PC-9 (cell line): ENCODE measurements at regions of chr16 and their contacts with region 1.

Region 1: DNA sequence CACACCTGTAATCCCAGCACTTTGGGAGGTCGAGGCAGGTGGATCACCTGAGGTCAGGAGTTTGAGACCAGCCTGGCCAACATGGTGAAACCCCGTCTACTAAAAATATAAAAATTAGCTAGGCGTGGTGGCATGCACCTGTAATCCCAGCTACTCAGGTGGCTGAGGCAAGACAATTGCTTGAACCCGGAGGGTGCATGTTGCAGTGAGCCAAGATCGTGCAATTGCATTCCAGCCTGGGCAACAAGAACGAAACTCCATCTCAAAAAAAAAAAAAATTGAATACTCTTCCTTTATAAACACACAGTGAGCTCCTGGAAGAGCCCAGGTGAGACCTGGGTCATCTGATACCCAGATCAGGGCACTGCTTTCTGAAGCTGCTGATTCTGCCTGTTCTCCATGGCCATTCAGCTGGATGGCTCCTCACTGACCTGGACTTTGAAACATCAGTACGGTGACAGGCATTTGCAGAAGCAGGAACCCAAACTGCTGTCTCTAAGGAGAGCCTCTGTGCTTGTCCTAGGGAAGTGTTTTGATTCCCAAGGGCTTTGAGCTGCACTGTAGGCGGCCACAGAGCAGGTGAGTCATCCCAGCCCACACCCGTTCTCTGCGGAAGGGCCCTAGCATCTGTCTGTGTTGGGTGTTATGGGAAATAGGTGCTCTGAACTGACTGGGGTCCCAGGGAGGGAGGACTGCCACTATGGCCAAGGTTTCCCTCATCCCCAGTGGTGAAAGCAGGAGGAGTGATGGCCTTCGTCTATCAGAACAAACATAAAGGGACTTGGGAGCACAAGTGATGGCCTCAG is 60.6 kb upstream of the ADCY9 start:
- DNase-seq: peak; percentile 65 to 69
- H3K4me3 ChIP-seq: peak overlapping the region; percentile 36; the same call in 1 of the 2 replicates
- H3K27ac ChIP-seq: peak overlapping the region; percentile 69
- H3K4me1 ChIP-seq: peaks cover 32% of the 10 kb centered on the region
- H3K27me3 ChIP-seq: no peaks in the 10 kb centered on the region
- CTCF ChIP-seq: no peak

Region 2: DNA sequence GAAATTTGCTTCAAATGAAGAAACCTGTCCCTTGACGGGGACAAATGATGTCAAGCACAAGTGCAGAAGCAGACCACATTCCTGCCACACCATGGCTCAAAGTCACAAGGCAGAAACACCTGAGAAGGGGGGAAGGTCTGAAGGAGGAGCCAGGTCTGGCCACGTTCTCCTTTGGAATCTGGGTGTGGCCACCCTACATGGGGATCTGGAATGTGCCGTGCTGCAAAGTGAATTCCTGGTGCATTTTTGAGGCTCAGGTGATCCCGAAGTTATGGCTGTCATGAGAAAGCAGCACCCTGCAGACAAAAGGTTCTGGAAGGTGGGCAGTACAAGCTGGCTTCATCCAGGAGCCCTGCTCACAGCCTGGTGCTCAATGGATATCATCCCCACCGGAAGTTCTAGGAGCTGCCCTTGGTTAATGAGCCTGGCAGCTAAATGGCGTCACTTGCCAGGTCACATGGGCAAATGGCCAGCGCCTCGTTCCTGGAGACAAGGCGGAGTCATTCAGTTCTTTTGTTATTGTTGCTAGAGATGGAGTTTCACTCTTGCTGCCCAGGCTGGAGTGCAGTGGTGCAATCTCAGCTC is 40.5 kb before region 1 on chr16:
- CTCF ChIA-PET with region 1: no interaction called
- POLR2A ChIA-PET with region 1: no interaction called
- intact Hi-C with region 1: loop called (anchors 2 kb)
- DNase-seq: peak; percentile 95 to 97
- H3K4me3 ChIP-seq: peak overlapping the region; percentile 9; the same call in 1 of the 2 replicates
- H3K27ac ChIP-seq: peak overlapping the region; percentile 84
- H3K4me1 ChIP-seq: peaks cover 11% of the 10 kb centered on the region
- H3K27me3 ChIP-seq: no peaks in the 10 kb centered on the region
- CTCF ChIP-seq: no peak; the same call in 1 of the 2 replicates

Region 3: DNA sequence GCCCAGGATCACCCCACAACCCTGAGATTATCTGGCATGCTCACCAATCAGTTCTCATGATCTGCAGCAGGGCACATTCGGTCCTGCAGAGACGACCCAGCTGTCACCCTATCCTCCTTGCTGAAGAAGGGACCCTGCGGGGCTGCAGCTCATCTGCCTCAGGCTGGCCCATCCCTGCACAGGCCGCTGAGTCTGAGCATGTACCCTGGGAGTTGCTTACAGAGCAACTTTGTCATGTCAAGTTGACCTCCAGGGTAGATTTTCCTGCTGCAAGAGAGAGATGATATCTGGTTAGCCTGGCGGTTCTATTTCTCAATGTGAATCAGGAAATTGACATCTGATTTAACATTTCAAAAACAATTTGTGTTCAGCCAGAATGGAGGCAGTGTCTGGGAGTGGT is 24.5 kb before region 1 on chr16:
- CTCF ChIA-PET with region 1: interaction called, 9 read pairs
- POLR2A ChIA-PET with region 1: interaction called, 10 read pairs
- intact Hi-C with region 1: no loop called
- DNase-seq: no peak
- H3K4me3 ChIP-seq: no peak overlapping the region
- H3K27ac ChIP-seq: no peak overlapping the region
- H3K4me1 ChIP-seq: no peaks in the 10 kb centered on the region
- H3K27me3 ChIP-seq: no peaks in the 10 kb centered on the region
- CTCF ChIP-seq: no peak